Heart left ventricle (tissue), 16 donors: ENCODE measurements at regions of chr9 and their contacts with region 1.

Region 1: DNA sequence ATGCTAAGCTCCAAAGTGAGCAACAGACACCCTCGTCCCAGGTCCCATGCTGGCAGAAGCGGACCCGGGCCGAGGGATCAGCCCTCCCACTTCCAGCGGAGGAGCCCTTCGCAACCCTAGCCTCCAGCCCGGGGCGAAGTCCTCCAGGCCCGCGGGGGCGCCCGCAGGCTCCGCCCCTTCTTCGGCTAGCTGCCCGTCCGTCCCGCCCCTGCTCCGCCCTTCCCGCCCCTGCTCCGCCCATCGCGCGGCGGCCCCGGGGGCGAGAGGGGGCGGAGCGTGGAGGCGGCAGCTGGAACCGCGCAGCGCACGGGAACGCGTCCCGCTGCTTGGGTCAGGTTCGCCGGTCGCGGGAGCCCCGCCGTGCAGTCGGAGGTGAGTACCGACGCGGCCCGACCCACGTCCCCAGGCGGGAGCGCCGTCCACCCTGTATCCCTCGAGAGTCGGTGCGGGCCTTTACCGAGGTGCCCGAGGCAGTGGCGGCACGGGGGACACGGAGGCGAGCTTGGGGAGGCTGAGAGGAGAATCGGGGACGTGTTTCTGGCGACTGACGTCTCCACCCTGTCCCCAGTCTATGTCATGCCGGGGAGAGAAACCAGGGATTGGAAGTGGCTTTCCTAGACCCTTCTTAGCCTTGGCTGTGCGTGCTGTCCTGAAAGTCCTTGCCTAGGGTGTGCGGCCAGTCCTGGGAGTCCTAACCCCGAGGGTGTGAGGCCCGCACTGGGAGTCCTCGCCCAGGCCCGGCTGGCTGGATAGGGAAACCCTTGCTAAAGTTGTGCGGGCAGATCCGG is at the start of gene ACO1:
- DNase-seq: peak; percentile 92 to 95 (median 94)
- ATAC-seq: peak; percentile 92 to 99 (median 98)
- H3K4me3 ChIP-seq: peak within 1 kb of the TSS; percentile 67 to 91 (median 83)
- H3K27ac ChIP-seq: peak within 1 kb of the TSS; percentile 52 to 93 (median 82)
- H3K4me1 ChIP-seq: peaks cover 0 to 37% (median 19%) of the 10 kb centered on the region in 12 donors
- H3K27me3 ChIP-seq: no peaks in the 10 kb centered on the region
- CTCF ChIP-seq: peak in 4 of 12 donors; percentile 19 to 35 (median 32)
- POLR2A ChIP-seq: peak; percentile 15 to 84
- total RNA-seq, gene ACO1: 44.5 to 68.3 (median 63.3) TPM

Region 2: GRCh38 chr9:32322622-32323021 is 61.9 kb before region 1 on chr9:
- intact Hi-C with region 1: no loop called
- DNase-seq: no peak
- ATAC-seq: no peak
- H3K4me3 ChIP-seq: no peak overlapping the region
- H3K27ac ChIP-seq: no peak overlapping the region
- H3K4me1 ChIP-seq: no peaks in the 10 kb centered on the region
- H3K27me3 ChIP-seq: peaks cover 0 to 3% (median 0%) of the 10 kb centered on the region in 9 donors
- CTCF ChIP-seq: no peak
- POLR2A ChIP-seq: no peak

Region 3: DNA sequence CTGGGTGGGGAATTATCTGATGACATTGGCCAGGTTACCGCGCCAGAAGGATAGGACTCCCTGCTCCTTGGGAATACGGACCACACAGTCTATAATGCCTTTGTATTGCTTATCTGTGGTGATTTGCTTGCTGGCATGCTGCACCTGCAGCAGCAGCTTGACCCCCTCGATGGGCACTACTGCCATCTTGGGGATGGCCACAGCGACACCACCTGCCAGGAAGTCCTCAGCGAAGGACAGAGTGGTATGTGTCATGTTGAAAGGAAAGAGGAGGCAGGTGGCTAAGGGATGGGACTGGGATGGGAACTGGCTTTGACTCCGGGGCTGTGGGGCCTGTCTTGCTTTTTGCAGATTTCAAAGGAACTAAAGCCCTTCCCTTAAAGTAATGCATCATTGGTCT is 50.5 kb before region 1 on chr9:
- intact Hi-C with region 1: no loop called
- DNase-seq: no peak
- ATAC-seq: no peak
- H3K4me3 ChIP-seq: no peak overlapping the region
- H3K27ac ChIP-seq: no peak overlapping the region
- H3K4me1 ChIP-seq: no peaks in the 10 kb centered on the region
- H3K27me3 ChIP-seq: peaks cover 0 to 3% (median 0%) of the 10 kb centered on the region in 9 donors
- CTCF ChIP-seq: no peak
- POLR2A ChIP-seq: no peak

Region 4: DNA sequence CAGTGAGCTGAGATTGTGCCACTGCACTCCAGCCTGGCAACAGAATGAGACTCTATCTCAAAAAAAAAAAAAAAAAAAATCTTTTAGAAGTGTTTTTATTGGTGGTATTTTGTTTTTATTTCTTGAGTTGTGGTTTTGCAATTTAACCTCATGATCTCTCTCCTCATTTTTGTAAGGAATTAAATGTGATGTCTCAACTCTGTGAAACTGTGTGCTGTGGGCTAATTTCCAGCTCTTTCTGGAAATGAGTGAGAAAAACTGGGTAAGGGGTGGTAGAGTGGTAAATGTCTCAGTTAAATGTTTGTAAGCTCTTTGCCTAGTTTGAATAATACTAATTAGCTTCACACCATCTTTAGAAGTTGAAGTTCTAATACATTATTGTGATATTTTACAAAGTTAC is 28.9 kb after region 1 on chr9:
- intact Hi-C with region 1: loop called in 1 of 10 experiments (anchors 1 kb)
- DNase-seq: no peak
- ATAC-seq: no peak
- H3K4me3 ChIP-seq: no peak overlapping the region
- H3K27ac ChIP-seq: no peak overlapping the region
- H3K4me1 ChIP-seq: no peaks in the 10 kb centered on the region
- H3K27me3 ChIP-seq: no peaks in the 10 kb centered on the region
- CTCF ChIP-seq: no peak
- POLR2A ChIP-seq: no peak

Region 5: DNA sequence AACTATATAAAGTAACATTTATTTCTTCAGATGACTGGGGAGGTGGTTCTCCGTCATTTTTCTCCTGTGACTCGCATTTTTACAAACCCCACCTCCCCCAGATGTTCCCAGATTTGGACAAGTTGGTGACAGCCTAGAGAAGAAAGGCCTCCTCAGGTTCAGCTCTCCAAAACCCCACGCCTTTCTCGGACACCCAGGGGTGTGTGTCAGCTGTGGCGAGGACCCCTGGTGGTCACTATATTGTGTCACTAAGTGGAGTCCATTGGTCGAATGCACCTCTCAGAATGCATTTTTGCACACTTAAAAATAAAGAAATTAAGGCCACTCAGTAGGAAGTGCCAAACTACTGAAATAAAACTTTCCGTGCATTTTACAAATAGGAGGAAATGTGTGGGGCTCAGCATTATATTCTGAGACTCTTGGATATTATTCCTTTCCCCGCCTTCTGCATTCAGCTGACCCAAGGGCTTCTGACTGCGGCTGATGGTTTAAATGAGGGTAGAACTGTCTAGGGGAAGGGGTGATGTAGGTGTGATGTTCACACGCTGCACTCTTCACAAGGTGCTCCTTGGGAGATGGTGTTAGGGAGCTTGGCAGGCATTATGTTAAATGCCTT is 47.5 kb after region 1 on chr9:
- intact Hi-C with region 1: loop called (anchors 1 to 5 kb)
- DNase-seq: peak in 4 of 5 donors; percentile 36 to 49 (median 38)
- ATAC-seq: peak in 2 of 4 donors; percentile 51 to 59
- H3K4me3 ChIP-seq: no peak overlapping the region
- H3K27ac ChIP-seq: no peak overlapping the region
- H3K4me1 ChIP-seq: peaks cover 0 to 3% (median 0%) of the 10 kb centered on the region in 12 donors
- H3K27me3 ChIP-seq: no peaks in the 10 kb centered on the region
- CTCF ChIP-seq: peak; percentile 40 to 64 (median 50)
- POLR2A ChIP-seq: no peak

Region 6: GRCh38 chr9:32550562-32551433 is 166.2 kb after region 1 on chr9:
- intact Hi-C with region 1: loop called in 1 of 10 experiments (anchors 5 kb)
- DNase-seq: peak; percentile 93 to 97 (median 95)
- ATAC-seq: peak; percentile 80 to 89 (median 88)
- H3K4me3 ChIP-seq: peak overlapping the region; percentile 54 to 87 (median 76)
- H3K27ac ChIP-seq: peak overlapping the region; percentile 64 to 99 (median 96)
- H3K4me1 ChIP-seq: peaks cover 0 to 39% (median 18%) of the 10 kb centered on the region in 12 donors
- H3K27me3 ChIP-seq: no peaks in the 10 kb centered on the region
- CTCF ChIP-seq: peak in 2 of 12 donors; percentile 13 to 40
- POLR2A ChIP-seq: peak in 1 of 2 donors; percentile 40